Heart left ventricle (tissue), 16 donors: ENCODE measurements at regions of chr13 and their contacts with region 1.

Region 1: DNA sequence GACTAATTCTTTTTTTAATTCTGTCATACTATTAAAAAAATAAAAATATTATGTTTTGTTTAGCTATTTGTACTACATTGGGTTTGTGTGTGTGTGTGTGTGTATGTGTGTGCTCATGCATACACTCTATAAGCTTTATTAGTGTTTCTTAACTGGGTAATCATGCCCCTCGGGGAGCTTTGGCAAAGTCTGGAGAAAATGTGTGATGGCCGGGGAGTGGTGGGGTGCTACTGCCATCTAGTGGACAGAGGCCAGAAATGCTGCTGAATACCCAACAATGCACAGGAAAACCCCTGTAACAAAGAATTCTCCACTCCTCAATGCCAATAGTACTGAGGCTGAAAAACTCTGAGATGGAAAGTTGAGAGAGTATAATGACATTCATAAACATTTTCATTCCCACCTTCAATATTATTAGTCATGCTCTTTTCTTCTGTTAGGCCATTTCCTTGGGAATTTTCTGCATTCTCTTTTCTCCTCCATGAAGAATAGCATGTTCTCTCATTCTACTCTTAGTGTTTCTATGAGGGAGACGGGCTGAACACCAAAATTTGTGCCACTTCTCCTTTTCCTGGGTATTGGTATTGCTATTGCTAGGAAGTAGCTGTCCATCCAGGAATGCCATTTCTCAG is 157.3 kb downstream of the DNAJC3 start:
- DNase-seq: peak; percentile 40 to 60 (median 50)
- ATAC-seq: peak in 3 of 4 donors; percentile 61 to 70 (median 70)
- H3K4me3 ChIP-seq: no peak overlapping the region
- H3K27ac ChIP-seq: no peak overlapping the region
- H3K4me1 ChIP-seq: peaks cover 0 to 9% (median 2%) of the 10 kb centered on the region in 12 donors
- H3K27me3 ChIP-seq: no peaks in the 10 kb centered on the region
- CTCF ChIP-seq: peak; percentile 80 to 97 (median 92)
- POLR2A ChIP-seq: no peak

Region 2: GRCh38 chr13:95181586-95181985 is 652.7 kb before region 1 on chr13:
- intact Hi-C with region 1: loop called in 1 of 10 experiments (anchors 10 kb)
- DNase-seq: no peak
- ATAC-seq: no peak
- H3K4me3 ChIP-seq: no peak overlapping the region
- H3K27ac ChIP-seq: no peak overlapping the region
- H3K4me1 ChIP-seq: peaks cover 0 to 18% (median 8%) of the 10 kb centered on the region in 12 donors
- H3K27me3 ChIP-seq: no peaks in the 10 kb centered on the region
- CTCF ChIP-seq: no peak
- POLR2A ChIP-seq: no peak

Region 3: GRCh38 chr13:95387733-95388207 is 446.5 kb before region 1 on chr13:
- intact Hi-C with region 1: loop called in 1 of 10 experiments (anchors 10 kb)
- DNase-seq: peak in 3 of 5 donors; percentile 37 to 53 (median 46)
- ATAC-seq: peak in 3 of 4 donors; percentile 19 to 77 (median 74)
- H3K4me3 ChIP-seq: no peak overlapping the region
- H3K27ac ChIP-seq: peak overlapping the region in 1 of 12 donors; percentile 14
- H3K4me1 ChIP-seq: peaks cover 0 to 8% (median 1%) of the 10 kb centered on the region in 12 donors
- H3K27me3 ChIP-seq: peaks cover 0 to 4% (median 0%) of the 10 kb centered on the region in 9 donors
- CTCF ChIP-seq: no peak
- POLR2A ChIP-seq: no peak

Region 4: DNA sequence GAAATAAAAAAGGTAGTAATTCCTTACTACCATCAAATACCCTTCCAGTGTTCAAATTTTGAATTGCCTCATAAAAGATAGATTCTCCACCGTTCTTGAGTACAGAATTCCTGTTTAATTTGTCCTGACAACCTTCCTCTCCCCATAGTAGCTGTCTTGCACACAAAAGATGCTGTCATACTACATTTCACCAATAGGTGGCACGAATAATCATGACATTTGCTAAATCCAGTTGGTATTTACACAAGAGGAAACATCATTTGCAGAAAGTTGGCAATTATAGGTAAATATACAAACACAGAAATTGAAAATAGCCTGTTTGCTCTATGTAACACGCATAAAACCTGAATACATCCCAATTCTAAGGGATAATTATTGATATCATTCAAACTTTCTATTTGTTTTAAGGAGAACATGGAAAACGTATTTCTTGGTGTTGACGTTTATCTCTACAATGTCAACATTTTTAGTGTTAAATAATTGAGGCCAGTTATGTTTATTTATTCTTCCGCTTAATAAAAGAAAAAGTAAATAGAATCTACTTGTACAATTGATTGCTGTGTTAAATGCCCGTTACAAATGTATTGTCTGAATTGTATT is 340.1 kb before region 1 on chr13:
- intact Hi-C with region 1: loop called in 3 of 10 experiments (anchors 5 to 10 kb)
- DNase-seq: no peak
- ATAC-seq: peak in 1 of 4 donors; percentile 45
- H3K4me3 ChIP-seq: no peak overlapping the region
- H3K27ac ChIP-seq: no peak overlapping the region
- H3K4me1 ChIP-seq: peaks cover 0 to 10% (median 3%) of the 10 kb centered on the region in 12 donors
- H3K27me3 ChIP-seq: no peaks in the 10 kb centered on the region
- CTCF ChIP-seq: peak; percentile 45 to 79 (median 66)
- POLR2A ChIP-seq: no peak

Region 5: DNA sequence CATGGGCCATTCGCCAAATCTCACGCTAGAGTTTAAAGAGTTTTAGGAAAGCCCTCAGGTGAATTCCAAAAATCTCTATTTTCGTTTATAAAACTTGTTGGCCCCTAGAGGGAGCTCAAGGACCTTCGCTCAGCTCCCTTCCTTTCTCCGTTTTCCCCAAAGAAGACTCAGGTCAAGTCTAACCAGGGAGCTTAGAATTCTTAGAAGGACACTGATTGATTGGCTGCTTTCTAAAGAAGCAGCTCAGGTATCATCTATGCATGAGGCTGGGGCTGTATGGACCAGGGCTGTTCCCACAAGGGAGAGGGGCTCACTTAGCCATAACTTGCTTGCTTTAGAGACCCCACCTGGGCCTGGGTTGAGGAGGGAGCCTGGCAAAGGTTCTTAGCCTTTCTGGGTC is 210.2 kb before region 1 on chr13:
- intact Hi-C with region 1: loop called (anchors 1 to 5 kb)
- DNase-seq: no peak
- ATAC-seq: peak in 2 of 4 donors; percentile 34 to 41
- H3K4me3 ChIP-seq: no peak overlapping the region
- H3K27ac ChIP-seq: no peak overlapping the region
- H3K4me1 ChIP-seq: peaks cover 0 to 9% (median 0%) of the 10 kb centered on the region in 12 donors
- H3K27me3 ChIP-seq: no peaks in the 10 kb centered on the region
- CTCF ChIP-seq: peak; percentile 44 to 75 (median 64)
- POLR2A ChIP-seq: no peak